ENCODE measurements at regions of chr11 and their contacts with region 1.

Region 1: DNA sequence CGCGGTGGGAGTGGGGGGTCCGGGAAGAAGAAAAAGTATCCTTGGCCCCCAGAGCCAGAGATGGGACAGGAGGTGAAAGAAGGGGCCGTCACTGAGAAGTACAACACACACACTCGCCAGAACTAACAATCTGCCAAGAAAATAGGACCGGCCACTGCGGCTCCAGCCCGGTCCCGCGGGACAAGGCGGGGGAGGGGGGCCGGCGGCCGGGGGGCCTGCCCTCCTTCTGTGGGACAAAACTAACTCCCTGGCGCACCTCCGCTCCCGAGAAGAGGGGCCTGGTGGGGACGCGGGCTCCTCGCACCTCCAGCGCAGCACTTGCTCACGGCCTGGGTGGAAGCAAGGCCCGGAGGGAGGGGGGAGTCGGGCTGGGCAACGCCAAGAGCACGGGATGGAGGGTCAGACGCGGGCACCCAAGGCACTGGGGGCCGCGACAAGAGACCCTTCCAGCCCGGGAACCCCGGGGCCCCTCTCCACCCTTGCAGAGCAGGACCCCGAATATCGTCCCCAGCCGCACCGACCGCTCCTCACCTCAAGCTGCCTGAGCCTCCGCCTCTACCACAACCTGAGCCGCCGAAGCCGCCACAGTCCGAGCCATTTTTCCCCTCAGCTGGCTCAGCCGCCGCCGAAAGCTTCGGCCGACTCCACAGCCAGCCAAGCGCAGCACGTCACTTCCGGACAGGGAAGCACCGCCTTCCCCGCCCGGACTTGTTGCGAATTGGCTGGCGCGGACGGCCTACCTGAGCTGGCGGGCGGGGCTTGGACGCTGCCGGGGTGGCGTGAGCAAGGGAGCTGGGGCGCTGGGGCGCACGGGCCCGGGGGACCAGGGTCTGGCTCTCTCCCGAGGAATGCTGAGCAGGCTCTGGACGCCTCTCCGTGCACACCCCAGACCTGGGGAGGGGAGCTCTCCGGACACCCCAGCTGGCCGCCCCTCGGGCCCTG is at the start of gene PIK3C2A:
- DNase-seq: peak; percentile 81
- ATAC-seq: peak; percentile 93
- H3K4me3 ChIP-seq: peak within 1 kb of the TSS; percentile 89 to 90
- H3K27ac ChIP-seq: peak within 1 kb of the TSS; percentile 96
- H3K4me1 ChIP-seq: peaks cover 8 to 21% of the 10 kb centered on the region in 2 experiments
- H3K27me3 ChIP-seq: no peaks in the 10 kb centered on the region
- CTCF ChIP-seq: no peak
- POLR2A ChIP-seq: peak; percentile 89
- RAD21 ChIP-seq: no peak
- total RNA-seq, gene PIK3C2A: 51.6 TPM

Region 2: GRCh38 chr11:16935518-16936302 is 271.9 kb before region 1 on chr11:
- CTCF ChIA-PET with region 1: no interaction called
- POLR2A ChIA-PET with region 1: no interaction called
- RAD21 ChIA-PET with region 1: no interaction called
- intact Hi-C with region 1: loop called (anchors 5 kb)
- DNase-seq: peak; percentile 32
- ATAC-seq: peak; percentile 89
- H3K4me3 ChIP-seq: no peak overlapping the region
- H3K27ac ChIP-seq: no peak overlapping the region
- H3K4me1 ChIP-seq: peaks cover 0 to 4% of the 10 kb centered on the region in 2 experiments; a peak in 1 of 4 replicates
- H3K27me3 ChIP-seq: no peaks in the 10 kb centered on the region
- CTCF ChIP-seq: peak; percentile 70 to 79 (median 73); a peak in 5 of 6 replicates
- POLR2A ChIP-seq: no peak
- RAD21 ChIP-seq: peak; percentile 72

Region 3: GRCh38 chr11:17244046-17244445 is 36.5 kb after region 1 on chr11:
- CTCF ChIA-PET with region 1: no interaction called
- POLR2A ChIA-PET with region 1: no interaction called
- RAD21 ChIA-PET with region 1: no interaction called
- intact Hi-C with region 1: loop called (anchors 1 kb)
- DNase-seq: no peak
- ATAC-seq: no peak
- H3K4me3 ChIP-seq: no peak overlapping the region
- H3K27ac ChIP-seq: no peak overlapping the region
- H3K4me1 ChIP-seq: no peaks in the 10 kb centered on the region
- H3K27me3 ChIP-seq: no peaks in the 10 kb centered on the region
- CTCF ChIP-seq: no peak
- POLR2A ChIP-seq: no peak
- RAD21 ChIP-seq: no peak